ENCODE measurements at regions of chr13 and their contacts with region 1.

Region 1: GRCh38 chr13:22278336-22278929 is 607.6 kb downstream of the FGF9 start:
- DNase-seq: peak; percentile 46
- CTCF ChIP-seq: peak; percentile 48

Region 2: GRCh38 chr13:21638319-21639282 is 639.8 kb before region 1 on chr13:
- in situ Hi-C with region 1: loop called (anchors 25 kb)
- DNase-seq: peak; percentile 60
- CTCF ChIP-seq: peak; percentile 39

Region 3: DNA sequence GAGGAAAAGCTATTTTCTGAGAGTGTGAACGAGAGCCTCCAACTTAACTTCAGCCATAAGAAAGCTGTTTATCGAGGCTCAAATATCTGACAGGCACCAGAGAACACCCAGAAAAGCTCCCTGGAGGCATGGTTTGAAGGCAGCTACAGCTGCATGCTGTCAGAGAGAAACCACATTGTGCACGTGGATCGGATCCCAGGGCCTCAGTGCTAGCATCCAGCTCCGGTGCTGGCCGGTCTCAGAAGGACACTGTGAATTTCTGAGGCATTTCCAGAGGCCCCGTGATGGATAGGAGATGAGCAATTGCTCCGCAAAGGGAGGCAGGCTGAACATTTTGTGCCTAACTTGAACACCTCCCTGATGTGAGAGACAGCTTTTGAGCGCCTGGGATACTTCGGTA is 291.8 kb before region 1 on chr13:
- in situ Hi-C with region 1: no loop called
- DNase-seq: no peak
- CTCF ChIP-seq: no peak

Region 4: DNA sequence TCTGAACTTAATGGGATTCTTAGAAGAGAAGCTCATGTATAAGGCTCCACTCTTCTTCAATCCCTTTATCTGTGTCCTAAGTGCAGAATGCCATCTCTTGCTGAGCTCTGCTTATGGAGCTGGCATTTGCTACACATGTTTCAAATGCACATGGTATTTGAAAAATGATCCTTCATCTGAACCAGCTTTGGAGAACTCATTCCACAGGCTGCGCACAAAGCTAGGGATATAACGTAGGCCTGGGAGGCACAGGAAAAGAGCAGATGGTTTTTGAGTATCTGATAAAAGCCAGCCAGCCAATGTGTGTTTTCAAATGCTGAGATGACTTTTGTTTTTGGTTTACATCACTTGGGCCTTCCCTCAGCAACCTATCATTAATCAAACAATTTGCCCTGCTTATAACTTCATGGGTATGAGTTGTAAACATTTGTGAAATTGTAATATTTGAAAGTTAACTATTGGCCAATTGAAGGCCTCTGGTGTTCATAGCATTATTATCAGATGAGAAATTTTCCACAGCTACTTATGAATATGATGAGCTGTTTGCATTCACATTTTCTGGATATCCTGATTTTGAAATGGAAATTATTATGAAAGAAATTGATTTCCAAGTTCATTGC is 121.5 kb after region 1 on chr13:
- in situ Hi-C with region 1: loop called (anchors 25 kb)
- DNase-seq: no peak
- CTCF ChIP-seq: no peak

Region 5: GRCh38 chr13:22461854-22462490 is 183.5 kb after region 1 on chr13:
- in situ Hi-C with region 1: no loop called
- DNase-seq: no peak
- CTCF ChIP-seq: no peak

Measured in GM13976 (cell line).